ENCODE measurements at regions of chr13 and their contacts with region 1.

Region 1: DNA sequence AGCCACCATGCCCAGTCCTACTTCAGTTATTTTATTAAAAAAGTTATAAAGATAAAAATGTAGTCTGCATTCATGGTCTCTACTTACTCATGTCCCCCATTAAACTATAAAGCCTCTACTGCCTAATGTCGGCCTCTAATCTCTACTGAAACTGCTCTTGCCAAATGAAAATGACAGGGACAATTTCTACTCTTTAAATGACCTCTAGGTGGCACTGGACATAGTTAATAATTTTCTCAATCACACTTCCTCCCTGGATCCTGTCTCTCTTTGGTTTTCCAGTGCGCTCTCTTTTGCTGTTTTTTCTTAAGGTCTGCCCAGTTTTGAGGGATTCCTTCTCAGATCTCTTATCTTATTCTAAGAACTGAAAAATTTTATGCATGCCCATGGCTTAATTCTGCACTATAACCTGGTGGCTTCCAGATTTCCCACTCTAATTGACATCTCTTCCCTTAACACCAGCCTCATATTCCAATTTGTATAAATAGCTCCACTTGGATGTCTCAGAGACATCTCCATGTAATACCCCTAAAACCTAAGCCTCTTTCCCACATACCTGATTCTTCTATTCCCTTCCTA is 54.3 kb downstream of the MTMR6 start:
- DNase-seq: no peak
- ATAC-seq: no peak
- H3K4me3 Mint-ChIP-seq: no peak overlapping the region
- H3K27ac Mint-ChIP-seq: no peak overlapping the region
- H3K4me1 Mint-ChIP-seq: no peaks in the 10 kb centered on the region
- H3K27me3 Mint-ChIP-seq: peaks cover 4% of the 10 kb centered on the region

Region 2: DNA sequence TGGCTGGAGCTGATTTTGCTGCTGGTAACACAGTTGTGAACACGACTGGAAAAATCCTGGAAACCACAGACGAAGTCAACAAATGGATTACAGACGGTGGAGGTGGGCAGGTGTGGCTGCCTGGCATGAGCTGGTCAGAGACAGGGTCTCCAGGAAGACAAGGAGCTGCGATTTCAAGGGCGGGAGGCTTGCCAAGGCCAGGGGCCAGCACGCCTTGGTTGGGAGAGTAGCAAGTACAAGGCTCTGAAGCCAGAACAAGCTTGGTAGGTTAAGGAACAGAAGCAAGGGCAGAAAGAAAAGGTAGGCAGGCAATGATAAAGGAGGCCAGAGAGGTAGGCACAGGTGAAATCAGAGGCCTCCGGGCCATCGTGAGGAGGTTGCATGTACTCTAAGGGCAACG is 10.3 kb before region 1 on chr13:
- CTCF ChIA-PET with region 1: no interaction called
- POLR2A ChIA-PET with region 1: no interaction called
- DNase-seq: no peak
- ATAC-seq: no peak
- H3K4me3 Mint-ChIP-seq: no peak overlapping the region
- H3K27ac Mint-ChIP-seq: no peak overlapping the region
- H3K4me1 Mint-ChIP-seq: peaks cover 3% of the 10 kb centered on the region
- H3K27me3 Mint-ChIP-seq: peaks cover 18% of the 10 kb centered on the region

Region 3: DNA sequence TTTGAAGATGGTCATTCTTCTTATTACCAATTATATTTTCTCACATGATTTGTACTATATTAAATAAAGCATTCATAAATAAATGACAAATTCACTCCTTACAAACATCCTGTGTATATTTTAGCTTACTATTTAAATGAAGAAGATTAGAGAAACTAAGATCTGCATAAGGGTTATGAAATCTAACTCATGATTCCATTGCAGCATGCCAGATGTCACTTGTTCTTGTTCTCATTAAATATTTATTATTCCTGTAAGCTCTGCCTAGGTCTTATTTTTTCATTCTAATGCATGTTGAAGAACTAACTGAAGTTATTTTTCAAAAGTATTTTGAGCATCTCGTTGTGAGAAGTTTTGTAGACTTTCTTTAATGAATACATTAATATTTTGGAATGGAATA is 86.7 kb after region 1 on chr13:
- CTCF ChIA-PET with region 1: no interaction called
- POLR2A ChIA-PET with region 1: no interaction called
- DNase-seq: no peak
- ATAC-seq: no peak
- H3K4me3 Mint-ChIP-seq: no peak overlapping the region
- H3K27ac Mint-ChIP-seq: no peak overlapping the region
- H3K4me1 Mint-ChIP-seq: no peaks in the 10 kb centered on the region
- H3K27me3 Mint-ChIP-seq: no peaks in the 10 kb centered on the region

Region 4: DNA sequence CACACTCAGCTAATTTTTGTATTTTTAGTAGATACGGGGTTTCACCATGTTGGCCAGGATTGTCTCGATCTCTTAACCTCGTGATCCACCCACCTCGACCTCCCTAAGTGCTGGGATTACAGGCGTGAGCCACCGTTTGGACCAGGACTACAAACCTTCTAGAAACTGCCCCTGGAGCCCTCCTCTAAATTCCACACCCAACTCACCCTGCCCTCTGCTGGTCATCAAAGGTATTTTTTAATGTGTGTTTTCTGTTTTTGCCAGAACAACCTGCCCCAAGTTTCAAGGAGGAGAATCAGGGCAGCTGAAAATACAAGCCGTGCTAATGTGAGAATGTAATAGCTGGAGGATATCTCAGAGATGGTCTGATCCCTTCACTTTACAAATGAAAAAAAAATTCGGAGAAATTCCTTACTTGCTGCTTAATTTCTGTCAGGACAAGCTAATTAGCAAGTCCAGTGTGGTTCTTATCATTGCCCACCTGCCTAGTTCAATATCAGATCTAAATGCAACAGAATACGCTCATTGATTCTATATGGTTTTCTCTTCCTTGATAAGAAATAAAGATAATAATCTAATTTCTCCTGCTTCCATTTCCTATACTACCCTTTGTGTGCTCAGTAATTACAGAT is 142.8 kb after region 1 on chr13:
- CTCF ChIA-PET with region 1: interaction called, 17 read pairs
- POLR2A ChIA-PET with region 1: no interaction called
- DNase-seq: peak; percentile 55
- ATAC-seq: no peak
- H3K4me3 Mint-ChIP-seq: no peak overlapping the region
- H3K27ac Mint-ChIP-seq: no peak overlapping the region
- H3K4me1 Mint-ChIP-seq: peaks cover 9% of the 10 kb centered on the region
- H3K27me3 Mint-ChIP-seq: peaks cover 67% of the 10 kb centered on the region

Measured in activated CD8-positive, alpha-beta T cell treated with anti-CD3 and anti-CD28 coated beads, Interleukin-2, amount 10 ng/mL, durations not matched to agents 7 days and 5 days (primary cell).